ENCODE measurements at regions of chr14 and their contacts with region 1.

Region 1: DNA sequence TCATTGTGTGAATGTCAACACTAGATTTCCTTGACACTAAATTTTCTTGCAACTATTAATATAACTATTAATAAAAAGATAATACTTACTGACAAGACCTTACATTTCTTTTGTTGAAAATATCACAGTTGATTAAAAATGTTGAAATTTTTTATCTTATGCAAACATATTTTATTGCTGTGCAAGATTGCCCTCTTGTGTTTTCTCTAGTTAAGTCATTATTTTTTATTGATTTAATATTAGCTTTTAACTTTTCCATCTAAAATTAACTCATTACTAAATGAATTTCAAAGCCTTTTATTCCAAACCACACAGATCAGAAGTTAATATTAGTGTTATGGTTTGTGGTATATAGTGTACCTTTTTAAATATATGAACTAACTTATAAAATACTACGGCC is 11.7 kb upstream of the NAA30 start:
- DNase-seq: no peak
- H3K4me3 ChIP-seq: no peak overlapping the region
- H3K27ac ChIP-seq: no peak overlapping the region
- H3K4me1 ChIP-seq: peaks cover 22% of the 10 kb centered on the region
- H3K27me3 ChIP-seq: no peaks in the 10 kb centered on the region
- CTCF ChIP-seq: peak; percentile 18 to 30

Region 2: GRCh38 chr14:57182760-57183503 is 195.7 kb before region 1 on chr14:
- CTCF ChIA-PET with region 1: no interaction called
- dilution Hi-C with region 1: no loop called
- in situ Hi-C with region 1: no loop called
- intact Hi-C with region 1: loop called (anchors 10 kb)
- DNase-seq: peak; percentile 2
- H3K4me3 ChIP-seq: no peak overlapping the region
- H3K27ac ChIP-seq: no peak overlapping the region
- H3K4me1 ChIP-seq: no peaks in the 10 kb centered on the region
- H3K27me3 ChIP-seq: peaks cover 1% of the 10 kb centered on the region
- CTCF ChIP-seq: peak; percentile 41 to 51

Region 3: DNA sequence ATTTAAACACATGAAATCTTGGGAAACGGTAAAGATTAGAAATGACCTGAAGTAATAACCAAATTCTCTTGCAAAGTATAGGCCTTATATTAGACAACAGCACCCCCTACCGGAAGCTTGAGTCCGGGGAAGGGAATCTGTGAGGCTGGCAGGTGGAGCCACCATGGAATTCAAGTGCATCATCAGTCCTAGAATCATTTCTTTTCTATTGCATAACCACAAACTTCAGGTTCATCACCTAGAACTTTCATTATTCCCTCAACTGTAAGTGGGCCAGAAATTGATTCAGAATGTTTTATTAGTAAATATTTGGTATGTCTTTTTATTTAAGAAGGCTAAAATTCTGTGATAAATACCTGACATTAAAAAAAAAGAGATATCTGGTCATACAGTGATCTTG is 61.4 kb before region 1 on chr14:
- CTCF ChIA-PET with region 1: no interaction called
- dilution Hi-C with region 1: no loop called
- in situ Hi-C with region 1: no loop called
- intact Hi-C with region 1: loop called (anchors 5 kb)
- DNase-seq: peak; percentile 67
- H3K4me3 ChIP-seq: no peak overlapping the region
- H3K27ac ChIP-seq: no peak overlapping the region
- H3K4me1 ChIP-seq: no peaks in the 10 kb centered on the region
- H3K27me3 ChIP-seq: no peaks in the 10 kb centered on the region
- CTCF ChIP-seq: peak; percentile 83 to 88

Region 4: DNA sequence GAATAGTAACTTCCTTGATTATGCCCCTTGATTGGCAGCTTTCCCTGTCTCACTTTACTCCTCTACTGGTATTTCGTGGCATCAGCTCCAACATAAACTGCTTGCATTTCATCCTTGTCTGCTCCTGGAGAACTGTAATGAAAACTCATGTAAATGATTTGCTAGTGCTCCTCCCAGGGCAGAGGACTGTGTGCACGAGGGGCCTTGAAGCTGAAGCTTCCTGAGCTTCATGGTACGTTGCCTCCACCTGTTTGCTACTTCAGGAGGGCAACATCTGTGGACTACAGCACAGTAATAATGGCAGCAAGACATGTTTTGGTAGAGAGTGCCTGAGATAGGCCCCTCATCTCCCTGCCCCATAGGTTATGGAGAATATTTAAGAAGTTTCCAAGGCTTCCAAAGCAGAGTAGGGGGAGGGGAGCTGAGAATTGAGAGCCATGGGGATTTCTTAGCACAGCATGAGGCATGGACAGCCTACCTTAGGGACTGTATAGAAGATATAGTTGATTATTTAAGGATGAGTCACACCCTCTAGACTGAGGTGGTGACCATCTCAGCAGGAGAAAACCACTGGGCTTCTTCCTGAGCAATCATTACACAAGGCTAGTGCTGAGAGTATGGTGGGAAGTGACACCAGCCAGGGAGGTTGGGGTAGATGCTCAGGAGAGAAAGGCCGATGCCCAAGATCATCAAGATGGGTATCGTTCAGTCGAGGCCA is 85.5 kb after region 1 on chr14:
- CTCF ChIA-PET with region 1: no interaction called
- dilution Hi-C with region 1: no loop called
- in situ Hi-C with region 1: no loop called
- intact Hi-C with region 1: no loop called
- DNase-seq: peak; percentile 8
- H3K4me3 ChIP-seq: no peak overlapping the region
- H3K27ac ChIP-seq: no peak overlapping the region
- H3K4me1 ChIP-seq: peaks cover 11% of the 10 kb centered on the region
- H3K27me3 ChIP-seq: no peaks in the 10 kb centered on the region
- CTCF ChIP-seq: no peak